ENCODE measurements at regions of chr6 and their contacts with region 1.

Region 1: DNA sequence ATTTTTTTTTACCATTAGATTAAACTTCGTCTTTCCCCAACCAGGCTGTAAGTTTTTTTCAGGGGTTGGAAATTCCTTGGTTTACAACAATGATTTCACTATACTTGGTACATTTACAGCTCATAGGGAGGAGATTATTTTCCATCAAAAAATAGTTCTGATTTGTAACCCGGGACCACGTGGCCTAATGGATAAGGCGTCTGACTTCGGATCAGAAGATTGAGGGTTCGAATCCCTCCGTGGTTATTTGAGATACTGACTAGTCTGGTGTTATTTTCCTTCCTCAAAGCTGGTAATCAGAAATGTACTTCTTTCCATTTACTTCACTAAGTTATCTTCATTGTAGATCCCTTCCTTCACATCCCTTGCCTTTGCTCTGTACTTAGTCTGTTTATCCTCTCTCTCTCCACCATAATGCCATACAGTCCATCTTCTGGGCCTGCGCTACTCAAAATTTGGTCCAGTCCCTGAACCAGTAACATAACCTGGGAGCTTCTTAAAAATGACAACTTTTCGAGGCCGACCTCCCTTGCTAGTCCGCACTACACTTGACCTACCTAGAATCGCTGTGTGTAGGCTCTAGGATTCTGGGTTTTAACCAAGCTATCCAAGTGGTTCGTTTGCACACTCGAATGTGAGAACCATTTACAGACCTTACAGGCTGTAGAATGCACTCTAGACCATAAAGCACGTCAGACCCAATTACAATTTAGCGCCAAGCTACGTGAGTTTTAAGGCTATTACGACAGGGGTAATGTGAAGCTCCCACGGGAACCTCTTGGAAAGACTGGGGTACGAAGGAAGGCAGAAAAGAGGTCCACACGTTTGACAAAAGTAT is 42.1 kb upstream of the BTN3A2 start:
- DNase-seq: peak; percentile 60
- H3K4me3 Mint-ChIP-seq: peak overlapping the region; percentile 86
- H3K27ac Mint-ChIP-seq: peak overlapping the region; percentile 91
- H3K4me1 Mint-ChIP-seq: peaks cover 45% of the 10 kb centered on the region
- H3K27me3 Mint-ChIP-seq: peaks cover 3% of the 10 kb centered on the region

Region 2: GRCh38 chr6:26175428-26176181 is 147.3 kb before region 1 on chr6:
- intact Hi-C with region 1: loop called (anchors 5 kb)
- DNase-seq: peak; percentile 52
- H3K4me3 Mint-ChIP-seq: peak overlapping the region; percentile 56
- H3K27ac Mint-ChIP-seq: peak overlapping the region; percentile 63
- H3K4me1 Mint-ChIP-seq: peaks cover 45% of the 10 kb centered on the region
- H3K27me3 Mint-ChIP-seq: no peaks in the 10 kb centered on the region

Region 3: GRCh38 chr6:26264547-26264946 is 58.3 kb before region 1 on chr6:
- intact Hi-C with region 1: no loop called
- DNase-seq: no peak
- H3K4me3 Mint-ChIP-seq: no peak overlapping the region
- H3K27ac Mint-ChIP-seq: no peak overlapping the region
- H3K4me1 Mint-ChIP-seq: peaks cover 10% of the 10 kb centered on the region
- H3K27me3 Mint-ChIP-seq: no peaks in the 10 kb centered on the region

Region 4: DNA sequence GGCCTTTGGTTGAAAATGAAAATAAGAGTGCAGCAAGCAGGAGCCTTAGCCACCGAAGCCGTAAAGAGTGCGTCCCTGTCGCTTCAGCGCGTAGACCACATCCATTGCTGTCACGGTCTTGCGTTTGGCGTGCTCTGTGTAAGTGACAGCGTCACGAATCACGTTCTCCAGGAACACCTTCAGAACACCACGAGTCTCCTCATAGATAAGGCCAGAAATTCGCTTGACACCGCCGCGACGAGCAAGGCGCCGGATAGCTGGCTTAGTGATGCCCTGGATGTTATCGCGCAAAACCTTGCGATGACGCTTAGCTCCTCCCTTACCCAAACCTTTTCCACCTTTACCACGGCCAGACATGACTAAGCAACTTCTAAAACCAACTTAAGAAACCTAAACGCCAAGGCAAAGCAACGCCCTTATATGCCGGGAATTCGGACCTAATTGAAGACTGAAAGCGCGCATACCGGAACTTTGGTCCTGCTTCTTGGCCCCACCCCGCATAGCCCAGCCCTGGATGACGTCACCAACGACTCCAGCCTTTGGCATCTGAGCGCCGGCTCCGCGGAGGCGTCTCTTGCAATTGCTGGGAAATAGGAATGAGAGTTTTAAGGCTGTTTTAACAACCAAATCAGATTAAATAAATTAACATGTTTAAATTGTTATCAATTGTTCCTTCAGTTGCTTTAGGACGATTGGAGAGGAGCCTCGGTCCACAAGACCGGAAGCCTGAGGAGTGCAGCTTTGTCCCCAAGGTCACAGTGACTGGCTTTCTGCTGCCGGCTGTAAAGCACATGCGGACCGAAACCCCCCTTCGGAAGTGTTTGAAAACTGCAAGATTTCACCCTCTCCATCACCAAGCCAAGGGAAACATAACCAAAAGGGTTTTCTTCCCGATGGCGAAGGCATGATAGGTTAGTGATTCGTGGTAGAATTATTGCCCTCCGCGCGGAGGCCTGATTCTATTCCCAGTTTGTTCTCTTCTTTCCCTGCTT is 37.4 kb before region 1 on chr6:
- intact Hi-C with region 1: loop called (anchors 1 kb)
- DNase-seq: peak; percentile 95
- H3K4me3 Mint-ChIP-seq: peak overlapping the region; percentile 88
- H3K27ac Mint-ChIP-seq: peak overlapping the region; percentile 95
- H3K4me1 Mint-ChIP-seq: peaks cover 33% of the 10 kb centered on the region
- H3K27me3 Mint-ChIP-seq: peaks cover 2% of the 10 kb centered on the region

Region 5: GRCh38 chr6:26553635-26554446 is 231.0 kb after region 1 on chr6:
- intact Hi-C with region 1: loop called (anchors 2 kb)
- DNase-seq: peak; percentile 78
- H3K4me3 Mint-ChIP-seq: no peak overlapping the region
- H3K27ac Mint-ChIP-seq: no peak overlapping the region
- H3K4me1 Mint-ChIP-seq: peaks cover 24% of the 10 kb centered on the region
- H3K27me3 Mint-ChIP-seq: no peaks in the 10 kb centered on the region

Region 6: GRCh38 chr6:26596579-26597388 is 273.9 kb after region 1 on chr6 and contains the start of gene ABT1:
- intact Hi-C with region 1: loop called (anchors 2 kb)
- DNase-seq: peak; percentile 96
- H3K4me3 Mint-ChIP-seq: no peak within 1 kb of the TSS
- H3K27ac Mint-ChIP-seq: no peak within 1 kb of the TSS
- H3K4me1 Mint-ChIP-seq: peaks cover 28% of the 10 kb centered on the region
- H3K27me3 Mint-ChIP-seq: peaks cover 27% of the 10 kb centered on the region
- total RNA-seq, gene ABT1: 28.2 and 29.9 TPM in 2 replicates

Measured in activated T-helper 2 cell treated with anti-CD3 and anti-CD28 coated beads, Interferon-gamma antibody, Interleukin-2, Interleukin-4, amounts not matched to agents 10 μg/mL and 5 μg/mL and 100 μg/mL, durations not matched to agents 14 hours and 24 hours and 36 hours (primary cell).